ENCODE measurements at regions of chr10 and their contacts with region 1.

Region 1: DNA sequence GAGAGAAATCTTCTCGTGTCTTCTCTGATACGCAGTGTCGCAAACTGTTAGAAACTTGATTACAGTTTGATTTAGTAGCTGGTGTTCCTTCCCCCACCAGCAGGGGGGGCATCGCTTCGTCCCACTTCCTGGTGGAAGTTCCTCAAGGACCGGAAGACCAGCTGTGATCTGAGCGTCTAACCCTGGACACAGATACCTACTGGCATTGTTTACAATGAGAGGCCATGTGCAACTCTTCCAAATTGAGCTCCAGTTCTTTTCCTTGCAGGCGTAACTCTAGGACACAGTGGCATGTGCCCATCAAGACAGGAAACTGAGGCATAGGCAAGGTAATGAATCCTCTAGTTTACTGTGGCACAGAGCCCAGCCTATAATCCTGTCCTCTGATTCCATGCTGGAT is 219.0 kb downstream of the CCDC3 start:
- DNase-seq: peak in 4 of 9 donors; percentile 0 to 20 (median 4)
- ATAC-seq: no peak
- H3K4me3 ChIP-seq: no peak overlapping the region
- H3K4me3 Mint-ChIP-seq: no peak overlapping the region
- H3K27ac ChIP-seq: no peak overlapping the region
- H3K27ac Mint-ChIP-seq: peak overlapping the region in 1 of 9 donors; percentile 33
- H3K4me1 ChIP-seq: no peaks in the 10 kb centered on the region
- H3K4me1 Mint-ChIP-seq: peaks cover 0 to 6% (median 5%) of the 10 kb centered on the region in 7 donors
- H3K27me3 ChIP-seq: no peaks in the 10 kb centered on the region
- H3K27me3 Mint-ChIP-seq: no peaks in the 10 kb centered on the region

Region 2: GRCh38 chr10:13074561-13075451 is 292.3 kb after region 1 on chr10:
- CTCF ChIA-PET with region 1: no interaction called
- POLR2A ChIA-PET with region 1: no interaction called
- intact Hi-C with region 1: loop called in 1 of 2 experiments (anchors 10 kb)
- DNase-seq: peak in 7 of 9 donors; percentile 7 to 45 (median 31)
- ATAC-seq: peak; percentile 60
- H3K4me3 ChIP-seq: no peak overlapping the region
- H3K4me3 Mint-ChIP-seq: no peak overlapping the region
- H3K27ac ChIP-seq: no peak overlapping the region
- H3K27ac Mint-ChIP-seq: no peak overlapping the region
- H3K4me1 ChIP-seq: no peaks in the 10 kb centered on the region
- H3K4me1 Mint-ChIP-seq: peaks cover 0 to 7% (median 0%) of the 10 kb centered on the region in 7 donors
- H3K27me3 ChIP-seq: peaks cover 0 to 5% of the 10 kb centered on the region in 2 donors
- H3K27me3 Mint-ChIP-seq: peaks cover 25 to 37% (median 33%) of the 10 kb centered on the region in 5 donors

Region 3: DNA sequence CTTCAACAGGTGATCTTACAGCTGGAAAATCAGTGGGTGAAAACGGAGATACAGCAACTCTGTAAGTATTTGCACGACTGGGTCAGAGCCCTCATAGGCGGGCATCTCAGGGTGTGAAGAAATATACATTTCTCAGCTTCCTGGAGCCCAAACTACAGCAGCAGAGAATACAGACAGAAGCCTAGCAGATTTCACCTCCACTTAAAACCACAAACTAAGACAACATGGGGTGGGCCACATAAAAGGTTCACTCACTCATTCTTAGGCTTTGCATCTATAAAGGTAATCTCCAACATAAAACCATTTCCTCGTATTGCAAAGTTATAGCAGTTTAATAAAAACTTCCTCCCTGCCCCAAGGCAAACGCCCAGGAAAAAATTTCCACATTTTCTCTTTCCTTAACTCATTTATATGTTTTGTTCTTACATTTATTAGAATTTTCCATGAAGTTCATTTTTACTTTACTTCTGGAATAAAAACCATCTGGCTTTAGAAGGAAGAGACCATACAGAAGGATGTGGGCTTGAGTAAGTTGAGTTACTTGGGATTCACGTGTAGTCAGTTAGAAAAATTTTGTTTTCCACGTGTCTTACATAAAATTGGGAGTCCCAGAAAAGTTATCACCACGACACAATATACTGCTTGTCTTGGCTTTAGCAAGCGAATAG is 1221.1 kb after region 1 on chr10:
- CTCF ChIA-PET with region 1: no interaction called
- POLR2A ChIA-PET with region 1: no interaction called
- intact Hi-C with region 1: no loop called
- DNase-seq: peak in 6 of 9 donors; percentile 39 to 71 (median 63)
- ATAC-seq: peak; percentile 90
- H3K4me3 ChIP-seq: no peak overlapping the region
- H3K4me3 Mint-ChIP-seq: peak overlapping the region in 9 of 10 donors; percentile 11 to 80 (median 60)
- H3K27ac ChIP-seq: peak overlapping the region; percentile 14
- H3K27ac Mint-ChIP-seq: peak overlapping the region in 8 of 9 donors; percentile 18 to 83 (median 44)
- H3K4me1 ChIP-seq: peaks cover 14 to 28% of the 10 kb centered on the region in 2 donors
- H3K4me1 Mint-ChIP-seq: peaks cover 22 to 68% (median 53%) of the 10 kb centered on the region in 7 donors
- H3K27me3 ChIP-seq: no peaks in the 10 kb centered on the region
- H3K27me3 Mint-ChIP-seq: peaks cover 0 to 28% (median 0%) of the 10 kb centered on the region in 5 donors

Measured in naive thymus-derived CD4-positive, alpha-beta T cell (primary cell).